Heart right ventricle (tissue), 16 donors: ENCODE measurements at regions of chr22 and their contacts with region 1.

Region 1: DNA sequence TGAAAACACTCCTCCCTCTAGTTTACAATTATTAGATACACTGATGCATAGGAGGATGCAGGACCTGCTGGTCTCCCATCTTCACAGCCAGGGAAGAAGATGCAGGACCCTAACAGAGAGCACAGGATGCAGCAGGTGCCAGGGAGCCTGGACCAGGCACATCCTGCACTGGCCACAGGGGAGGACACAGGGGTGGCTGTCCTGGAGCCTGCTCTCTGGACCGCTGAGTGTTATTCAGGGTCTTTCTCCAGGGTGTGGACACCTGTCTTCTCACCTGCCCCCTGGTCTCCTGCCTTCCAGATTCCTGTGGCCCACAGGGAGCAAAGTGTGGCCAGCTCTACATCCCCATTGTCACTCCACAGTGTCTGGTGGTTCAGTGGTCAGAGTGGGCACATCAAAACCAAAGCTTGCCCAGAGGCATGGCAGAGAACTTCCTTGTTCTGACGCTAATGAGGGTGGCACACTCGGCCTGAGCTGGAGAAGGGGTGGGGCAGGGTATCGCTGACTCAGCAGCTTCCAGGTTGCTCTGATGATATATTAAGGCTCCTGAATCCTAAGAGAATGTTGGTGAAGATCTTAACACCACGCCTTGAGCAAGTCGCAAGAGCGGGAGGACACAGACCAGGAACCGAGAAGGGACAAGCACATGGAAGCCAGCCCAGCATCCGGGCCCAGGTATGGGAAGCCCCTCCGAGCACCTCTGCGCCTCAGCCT is at the start of gene APOBEC3A:
- DNase-seq: no peak
- ATAC-seq: peak in 2 of 8 donors; percentile 38 to 42
- H3K4me3 ChIP-seq: no peak within 1 kb of the TSS
- H3K27ac ChIP-seq: peak within 1 kb of the TSS in 1 of 10 donors; percentile 75
- H3K4me1 ChIP-seq: peaks cover 0 to 42% (median 0%) of the 10 kb centered on the region in 9 donors
- H3K27me3 ChIP-seq: no peaks in the 10 kb centered on the region
- CTCF ChIP-seq: no peak
- total RNA-seq, gene APOBEC3A: 0.20 to 5.6 (median 1.0) TPM in 9 of 10 donors, not detected in the other

Region 2: DNA sequence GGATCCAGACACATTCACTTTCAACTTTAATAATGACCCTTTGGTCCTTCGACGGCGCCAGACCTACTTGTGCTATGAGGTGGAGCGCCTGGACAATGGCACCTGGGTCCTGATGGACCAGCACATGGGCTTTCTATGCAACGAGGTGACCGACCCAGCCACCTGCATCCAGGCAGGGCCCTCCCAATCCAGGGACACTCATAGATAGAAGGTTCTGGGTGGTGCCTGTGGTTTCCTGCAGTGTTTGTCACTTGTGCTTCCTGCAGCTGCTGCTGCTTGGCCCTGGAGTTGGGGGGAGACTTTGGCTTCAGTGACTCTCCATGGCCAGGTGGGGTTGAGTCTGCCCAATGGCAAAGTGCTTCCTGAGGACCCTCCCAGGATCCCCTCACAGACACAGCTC is 32.3 kb after region 1 on chr22:
- intact Hi-C with region 1: loop called in 1 of 10 experiments (anchors 2 kb)
- DNase-seq: no peak
- ATAC-seq: no peak
- H3K4me3 ChIP-seq: no peak overlapping the region
- H3K27ac ChIP-seq: no peak overlapping the region
- H3K4me1 ChIP-seq: peaks cover 0 to 7% (median 0%) of the 10 kb centered on the region in 9 donors
- H3K27me3 ChIP-seq: no peaks in the 10 kb centered on the region
- CTCF ChIP-seq: no peak

Region 3: DNA sequence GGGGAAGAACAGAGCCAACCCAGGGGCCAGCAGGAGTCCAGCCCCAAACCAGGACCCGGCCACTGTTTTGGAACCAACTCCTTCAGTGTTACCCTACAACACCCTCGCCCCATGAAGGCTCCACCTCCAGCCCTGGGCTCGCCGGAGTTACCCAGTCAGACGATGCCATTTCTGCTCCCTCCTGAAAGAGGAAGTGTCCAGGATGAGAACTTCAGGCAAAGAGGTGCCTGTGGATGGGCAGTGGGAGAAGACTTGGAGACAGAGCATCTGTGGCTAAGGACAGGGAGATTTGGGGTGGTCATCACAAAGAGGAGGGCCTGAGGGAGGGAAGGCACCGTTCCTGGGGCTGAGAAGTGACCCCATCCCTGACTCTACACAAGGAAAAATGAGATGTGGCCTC is 38.9 kb after region 1 on chr22:
- intact Hi-C with region 1: loop called in 2 of 10 experiments (anchors 2 to 5 kb)
- DNase-seq: no peak
- ATAC-seq: no peak
- H3K4me3 ChIP-seq: no peak overlapping the region
- H3K27ac ChIP-seq: no peak overlapping the region
- H3K4me1 ChIP-seq: peaks cover 0 to 7% (median 0%) of the 10 kb centered on the region in 9 donors
- H3K27me3 ChIP-seq: peaks cover 0 to 21% (median 4%) of the 10 kb centered on the region in 7 donors
- CTCF ChIP-seq: no peak